A549 (cell line): ENCODE measurements at regions of chr16 and their contacts with region 1.

Region 1: GRCh38 chr16:15643048-15643945 is at the start of gene MARF1:
- DNase-seq: peak; percentile 68 to 97
- ATAC-seq: peak; percentile 81 to 88
- H3K4me3 ChIP-seq: peak within 1 kb of the TSS; percentile 89
- H3K27ac ChIP-seq: peak within 1 kb of the TSS; percentile 99 to 100
- H3K4me1 ChIP-seq: peaks cover 30% of the 10 kb centered on the region
- CTCF ChIP-seq: peak; percentile 52
- EP300 ChIP-seq: no peak
- POLR2A ChIP-seq: peak; percentile 83
- RAD21 ChIP-seq: peak; percentile 33 to 36; a peak in 3 of 5 replicates
- polyA plus RNA-seq, gene MARF1: 28.2 and 40.0 TPM in 2 replicates

Region 2: GRCh38 chr16:15450624-15451023 is 192.7 kb before region 1 on chr16:
- CTCF ChIA-PET with region 1: no interaction called
- POLR2A ChIA-PET with region 1: no interaction called
- DNase-seq: no peak
- ATAC-seq: no peak
- H3K4me3 ChIP-seq: no peak overlapping the region
- H3K27ac ChIP-seq: no peak overlapping the region
- H3K4me1 ChIP-seq: peaks cover 18% of the 10 kb centered on the region
- CTCF ChIP-seq: no peak
- EP300 ChIP-seq: no peak
- POLR2A ChIP-seq: no peak
- RAD21 ChIP-seq: no peak

Region 3: GRCh38 chr16:15592324-15592723 is 51.0 kb before region 1 on chr16:
- CTCF ChIA-PET with region 1: no interaction called
- POLR2A ChIA-PET with region 1: interaction called, 13 read pairs
- DNase-seq: no peak
- ATAC-seq: no peak
- H3K4me3 ChIP-seq: no peak overlapping the region
- H3K27ac ChIP-seq: peak overlapping the region; percentile 92 to 93
- H3K4me1 ChIP-seq: peaks cover 39% of the 10 kb centered on the region
- CTCF ChIP-seq: no peak
- EP300 ChIP-seq: no peak
- POLR2A ChIP-seq: no peak
- RAD21 ChIP-seq: no peak

Region 4: DNA sequence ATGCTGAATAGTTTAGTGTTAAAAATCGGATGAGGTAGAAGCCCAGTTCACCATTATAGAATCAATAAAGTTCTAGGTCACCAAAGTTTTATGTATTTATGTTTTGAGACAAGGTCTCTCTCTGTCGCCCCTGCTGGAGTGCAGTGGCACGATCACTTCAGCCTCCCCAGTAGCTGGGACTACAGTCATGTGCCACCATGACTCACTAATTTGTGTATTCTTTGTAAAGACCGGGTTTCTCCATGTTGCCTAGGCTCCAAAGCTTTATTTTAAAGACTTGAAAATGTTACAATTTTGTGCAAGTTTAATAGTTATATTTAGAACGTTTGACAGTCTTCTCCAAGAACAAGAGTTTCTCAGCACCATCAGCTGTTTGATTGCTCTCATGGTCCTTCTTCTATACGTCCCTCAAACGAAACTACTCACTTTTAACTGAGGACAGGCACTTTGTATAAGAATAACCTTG is 38.8 kb after region 1 on chr16:
- CTCF ChIA-PET with region 1: interaction called, 10 read pairs
- POLR2A ChIA-PET with region 1: interaction called, 6 read pairs
- DNase-seq: peak; percentile 64 to 80
- ATAC-seq: peak; percentile 97 to 98
- H3K4me3 ChIP-seq: no peak overlapping the region
- H3K27ac ChIP-seq: peak overlapping the region; percentile 58 to 76
- H3K4me1 ChIP-seq: peaks cover 12% of the 10 kb centered on the region; the same call in 2 of the 3 replicates
- CTCF ChIP-seq: peak; percentile 54
- EP300 ChIP-seq: no peak
- POLR2A ChIP-seq: no peak
- RAD21 ChIP-seq: peak; percentile 32 to 36; a peak in 3 of 5 replicates